ENCODE measurements at regions of chr7 and their contacts with region 1.

Region 1: DNA sequence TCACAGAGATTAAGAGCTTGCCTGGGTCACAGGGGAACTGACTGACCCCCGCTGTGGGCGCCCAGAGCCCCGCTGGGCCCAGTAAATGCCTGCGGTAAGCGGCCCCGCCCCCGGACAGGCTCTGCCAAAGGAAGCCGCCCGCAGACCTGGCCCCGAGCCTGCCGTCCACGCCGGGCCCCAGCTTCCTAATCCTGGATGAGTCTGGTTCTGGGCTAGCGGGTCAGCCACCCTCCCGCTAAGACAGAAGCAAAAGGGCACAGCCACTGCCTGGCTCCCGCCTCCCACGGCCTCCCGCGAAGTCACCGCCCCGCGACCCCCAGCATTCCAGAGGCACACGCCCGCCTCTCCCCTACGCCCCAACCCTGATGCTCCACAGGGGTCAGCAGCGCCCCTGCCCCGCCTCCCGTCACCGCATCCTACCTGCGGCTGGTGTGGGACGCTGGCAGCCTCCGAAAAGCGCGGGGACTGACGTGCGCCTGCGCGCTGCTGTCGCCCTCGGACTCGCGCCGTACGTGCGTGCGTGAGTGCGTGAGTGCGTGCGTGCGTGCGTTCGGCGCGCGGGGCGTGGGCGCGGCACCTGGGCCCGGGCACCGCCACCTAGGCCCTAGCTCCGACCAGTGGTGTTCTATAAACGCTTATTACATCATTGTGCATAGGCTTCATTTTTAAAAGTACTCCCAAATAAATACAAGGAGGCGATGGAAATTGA is at the start of gene FIGNL1:
- DNase-seq: peak; percentile 86
- H3K4me3 Mint-ChIP-seq: peak within 1 kb of the TSS; percentile 94
- H3K27ac Mint-ChIP-seq: peak within 1 kb of the TSS; percentile 91
- H3K4me1 Mint-ChIP-seq: peaks cover 45% of the 10 kb centered on the region
- H3K27me3 Mint-ChIP-seq: no peaks in the 10 kb centered on the region
- total RNA-seq, gene FIGNL1: 43.7 to 44.4 TPM

Region 2: DNA sequence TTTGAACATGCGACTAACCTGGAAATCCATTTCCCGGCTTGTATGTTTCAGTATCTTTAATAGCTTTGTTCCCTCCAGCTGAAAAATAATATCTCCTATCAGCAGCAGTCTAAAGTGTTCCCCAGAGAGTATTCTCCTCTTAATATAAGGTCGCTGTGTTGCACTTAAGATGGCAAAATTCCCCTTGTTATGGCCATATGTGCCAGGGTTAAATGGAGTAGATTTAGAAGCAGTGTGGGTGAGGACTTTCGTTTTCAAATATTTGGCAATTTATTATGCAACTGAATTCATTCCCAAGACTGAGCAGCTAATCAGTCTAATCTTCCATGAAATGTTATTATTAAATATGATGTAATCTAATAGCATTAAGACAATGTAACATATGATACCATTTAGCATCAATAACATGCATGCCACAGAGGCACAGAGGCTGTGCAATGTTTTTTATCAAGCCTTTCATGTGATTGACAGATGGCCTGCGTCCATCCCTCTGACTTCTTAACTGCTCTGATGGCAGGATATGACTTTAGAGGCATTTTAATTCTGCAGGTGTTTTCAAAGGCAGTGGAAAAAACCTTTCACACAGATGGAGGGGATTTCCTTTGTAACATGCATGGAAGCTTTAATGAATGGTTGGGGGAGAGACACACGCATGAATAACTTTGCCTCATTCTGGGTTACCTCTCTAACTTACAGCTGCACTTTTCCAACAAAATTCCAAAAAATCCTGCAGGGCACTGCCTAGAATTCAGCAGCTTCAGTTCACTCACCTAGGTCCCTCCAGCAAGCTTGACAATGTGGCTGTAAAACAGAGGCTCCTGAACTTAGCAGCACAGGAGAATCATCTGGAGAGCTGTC is 301.9 kb before region 1 on chr7:
- CTCF ChIA-PET with region 1: interaction called, 4 read pairs
- intact Hi-C with region 1: loop called (anchors 1 kb)
- DNase-seq: peak; percentile 73
- H3K4me3 Mint-ChIP-seq: peak overlapping the region; percentile 34
- H3K27ac Mint-ChIP-seq: peak overlapping the region; percentile 91
- H3K4me1 Mint-ChIP-seq: peaks cover 91% of the 10 kb centered on the region
- H3K27me3 Mint-ChIP-seq: no peaks in the 10 kb centered on the region

Region 3: GRCh38 chr7:50266635-50267386 is 183.2 kb before region 1 on chr7:
- CTCF ChIA-PET with region 1: no interaction called
- intact Hi-C with region 1: loop called (anchors 2 kb)
- DNase-seq: peak; percentile 84
- H3K4me3 Mint-ChIP-seq: peak overlapping the region; percentile 55
- H3K27ac Mint-ChIP-seq: peak overlapping the region; percentile 94
- H3K4me1 Mint-ChIP-seq: peaks cover 91% of the 10 kb centered on the region
- H3K27me3 Mint-ChIP-seq: no peaks in the 10 kb centered on the region

Region 4: GRCh38 chr7:50397320-50397970 is 52.6 kb before region 1 on chr7:
- CTCF ChIA-PET with region 1: interaction called, 4 read pairs
- intact Hi-C with region 1: loop called (anchors 1 kb)
- DNase-seq: peak; percentile 60
- H3K4me3 Mint-ChIP-seq: no peak overlapping the region
- H3K27ac Mint-ChIP-seq: peak overlapping the region; percentile 78
- H3K4me1 Mint-ChIP-seq: peaks cover 81% of the 10 kb centered on the region
- H3K27me3 Mint-ChIP-seq: no peaks in the 10 kb centered on the region

Region 5: DNA sequence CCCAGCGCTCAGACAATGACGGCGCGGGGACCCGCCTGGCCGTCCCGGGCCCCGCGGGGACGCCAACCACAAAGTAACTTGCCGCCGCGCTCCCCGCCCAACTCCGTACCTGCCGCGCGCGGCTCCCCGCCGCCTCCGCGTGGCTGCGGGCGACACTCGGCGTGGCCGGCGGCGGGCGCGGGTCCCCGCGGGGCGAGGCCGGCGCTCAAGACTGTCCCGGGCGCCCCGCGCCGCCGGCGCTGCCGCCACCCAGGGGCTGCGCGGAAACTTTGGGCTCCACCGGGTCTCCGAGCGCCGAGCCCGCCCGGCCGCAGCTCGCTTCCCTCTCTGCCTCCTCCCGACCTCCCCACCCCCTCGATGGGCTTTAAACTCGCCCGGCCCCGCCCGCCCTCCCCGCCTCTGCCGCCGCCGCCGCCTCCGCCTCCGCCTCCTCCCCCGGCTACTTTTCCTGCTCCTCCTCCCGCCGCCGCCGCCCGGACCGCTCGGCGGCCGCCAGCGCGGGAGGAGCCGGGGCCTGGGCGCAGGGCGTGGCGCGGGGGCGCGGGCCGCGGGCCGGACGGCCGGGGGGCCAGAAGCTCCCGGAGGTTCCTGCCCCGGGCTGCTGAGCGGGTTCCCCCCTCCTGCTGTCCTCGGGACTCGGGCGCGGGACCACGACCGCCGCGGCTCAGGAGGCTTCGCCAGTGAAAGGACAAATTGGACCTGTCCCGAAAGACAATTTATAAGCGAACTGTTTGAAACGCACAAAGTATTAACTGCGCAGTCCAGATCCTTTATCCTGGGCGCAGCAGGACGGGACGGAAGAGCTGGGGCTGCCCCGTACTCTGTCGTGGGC is 343.3 kb after region 1 on chr7:
- CTCF ChIA-PET with region 1: no interaction called
- intact Hi-C with region 1: loop called (anchors 5 kb)
- DNase-seq: peak; percentile 40
- H3K4me3 Mint-ChIP-seq: peak overlapping the region; percentile 63
- H3K27ac Mint-ChIP-seq: no peak overlapping the region
- H3K4me1 Mint-ChIP-seq: peaks cover 17% of the 10 kb centered on the region
- H3K27me3 Mint-ChIP-seq: peaks cover 26% of the 10 kb centered on the region

Measured in activated naive CD4-positive, alpha-beta T cell treated with anti-CD3 and anti-CD28 coated beads for 36 hours (primary cell).